Heart right ventricle (tissue), 16 donors: ENCODE measurements at regions of chr6 and their contacts with region 1.

Region 1: DNA sequence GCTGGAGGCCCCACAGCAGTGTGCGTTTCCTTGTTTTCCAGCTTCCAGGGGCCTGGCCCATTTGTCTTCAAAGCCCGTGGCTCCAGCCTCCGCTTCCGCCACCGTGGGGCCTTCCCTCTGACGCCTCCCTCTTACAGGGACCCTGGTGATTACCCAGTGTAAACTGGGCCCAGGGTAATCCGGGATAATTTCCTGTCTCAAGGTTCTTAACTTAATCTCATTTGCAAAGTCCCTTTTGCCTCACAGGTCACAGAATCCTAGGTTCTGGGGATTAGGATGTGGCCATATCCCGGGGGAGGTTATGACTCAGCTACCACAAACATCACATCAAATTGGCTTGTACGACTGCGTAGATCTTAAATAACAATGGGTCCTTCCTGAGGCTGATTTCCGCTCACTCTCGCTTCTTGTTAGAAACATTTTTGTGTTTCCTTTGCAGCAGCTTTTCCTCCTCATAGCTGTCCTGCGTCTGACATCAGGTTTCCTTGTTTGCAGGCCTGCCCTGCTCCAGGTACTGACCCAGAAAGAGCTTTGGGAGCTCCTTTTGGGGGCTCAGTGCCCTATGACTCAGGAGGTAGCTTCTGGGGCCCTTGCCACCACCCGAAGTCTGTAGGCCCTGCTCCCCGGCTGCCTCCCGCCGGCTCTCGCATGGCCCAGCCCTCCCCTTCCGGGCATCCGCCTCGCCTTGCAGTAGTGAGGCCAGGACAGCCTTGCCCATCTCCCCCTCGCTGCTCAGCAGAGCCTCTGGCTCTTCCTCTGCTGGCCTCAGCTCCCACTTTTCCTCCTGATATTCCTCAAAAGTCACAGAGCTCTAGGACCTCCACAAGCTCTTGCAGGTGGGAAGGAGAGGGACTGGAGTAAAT is 100.5 kb downstream of the ERMARD start:
- DNase-seq: peak in 1 of 2 donors; percentile 71
- ATAC-seq: peak; percentile 78 to 96 (median 91)
- H3K4me3 ChIP-seq: no peak overlapping the region
- H3K27ac ChIP-seq: peak overlapping the region; percentile 48 to 90 (median 84)
- H3K4me1 ChIP-seq: peaks cover 0 to 26% (median 20%) of the 10 kb centered on the region in 9 donors
- H3K27me3 ChIP-seq: peaks cover 0 to 5% (median 0%) of the 10 kb centered on the region in 7 donors
- CTCF ChIP-seq: no peak

Region 2: DNA sequence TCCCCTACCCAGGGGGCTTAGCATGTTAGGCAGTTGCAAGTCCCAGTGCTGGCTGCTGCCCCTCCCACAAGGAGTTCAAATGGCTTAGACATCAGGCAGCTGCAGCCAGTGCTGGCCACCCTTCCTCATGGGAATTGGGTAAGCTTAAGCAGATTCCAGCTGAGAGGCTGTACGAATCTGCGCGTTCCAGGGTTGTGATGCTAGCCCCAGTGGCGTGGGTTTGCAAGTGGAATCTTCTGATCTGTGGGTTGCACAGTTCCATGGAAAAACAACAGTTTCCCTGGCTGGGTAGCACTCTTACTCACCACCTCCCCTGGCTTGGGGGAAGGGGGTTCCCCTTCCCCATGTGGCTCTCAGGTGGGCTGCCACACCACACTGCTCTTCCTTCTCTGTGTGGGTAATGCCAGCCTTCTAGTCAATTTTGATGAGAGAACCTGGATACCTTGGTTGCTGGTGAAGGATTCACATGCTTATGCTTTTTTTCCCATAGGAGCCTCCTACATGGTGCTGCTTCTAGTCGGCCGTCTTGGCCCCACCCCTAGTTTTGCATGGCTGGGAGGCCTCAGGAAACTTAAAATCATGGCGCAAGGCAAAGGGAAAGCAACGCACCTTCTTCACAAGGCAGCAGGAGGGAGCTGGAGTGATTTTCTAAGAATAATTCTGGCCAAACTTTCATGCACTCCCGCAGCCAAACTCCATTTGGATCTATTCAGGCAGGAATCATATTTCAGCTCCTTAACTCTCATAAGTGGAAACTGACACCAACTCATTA is 113.5 kb before region 1 on chr6:
- intact Hi-C with region 1: no loop called
- DNase-seq: no peak
- ATAC-seq: peak in 3 of 8 donors; percentile 37 to 77 (median 49)
- H3K4me3 ChIP-seq: no peak overlapping the region
- H3K27ac ChIP-seq: peak overlapping the region in 1 of 10 donors; percentile 13
- H3K4me1 ChIP-seq: peaks cover 0 to 7% (median 0%) of the 10 kb centered on the region in 9 donors
- H3K27me3 ChIP-seq: peaks cover 0 to 5% (median 0%) of the 10 kb centered on the region in 7 donors
- CTCF ChIP-seq: no peak

Region 3: GRCh38 chr6:169905041-169905807 is 53.4 kb after region 1 on chr6:
- intact Hi-C with region 1: loop called in 3 of 10 experiments (anchors 5 kb)
- DNase-seq: peak in 1 of 2 donors; percentile 59
- ATAC-seq: peak; percentile 70 to 88 (median 78)
- H3K4me3 ChIP-seq: no peak overlapping the region
- H3K27ac ChIP-seq: peak overlapping the region in 6 of 10 donors; percentile 6 to 55 (median 40)
- H3K4me1 ChIP-seq: peaks cover 4 to 40% (median 28%) of the 10 kb centered on the region in 9 donors
- H3K27me3 ChIP-seq: peaks cover 0 to 11% (median 0%) of the 10 kb centered on the region in 7 donors
- CTCF ChIP-seq: no peak